ENCODE measurements at regions of chr19 and their contacts with region 1.

Region 1: DNA sequence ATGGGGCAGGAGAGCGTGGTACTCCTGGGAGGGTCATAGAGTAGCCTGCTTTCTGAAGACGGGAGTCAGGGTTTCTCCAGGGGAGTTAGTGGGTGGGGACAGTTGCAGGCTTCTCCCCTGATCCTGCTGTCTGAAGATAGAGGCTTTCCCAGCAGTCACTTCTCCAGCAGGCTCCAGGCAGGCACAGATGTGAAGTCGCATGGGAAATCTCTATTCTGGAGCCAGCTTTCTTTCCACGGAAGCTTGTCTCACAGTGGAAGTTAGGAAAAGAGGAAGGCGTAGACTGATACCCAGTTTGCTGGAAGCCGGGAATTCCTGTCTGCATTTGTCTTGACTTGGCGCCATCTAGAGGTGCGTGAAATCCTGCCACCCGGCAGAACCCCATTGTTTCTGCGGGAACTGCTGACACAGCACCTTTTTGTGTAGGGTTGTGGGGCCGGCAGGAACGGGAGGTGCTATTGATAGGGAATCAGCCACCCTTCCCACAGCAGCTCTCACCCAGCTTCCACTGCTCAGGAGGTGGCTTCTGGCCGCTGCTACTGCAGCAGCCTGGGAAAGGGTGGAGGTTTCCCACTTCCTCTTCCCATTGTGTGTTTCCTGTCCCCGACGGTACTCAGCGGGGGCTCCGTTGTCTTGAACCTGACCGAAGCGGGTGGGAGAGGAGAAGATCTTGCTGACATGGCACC is 28.5 kb upstream of the NPAS1 start:
- DNase-seq: peak; percentile 93
- H3K4me3 ChIP-seq: peak overlapping the region; percentile 2
- H3K27ac ChIP-seq: peak overlapping the region; percentile 57
- H3K4me1 ChIP-seq: peaks cover 22% of the 10 kb centered on the region
- H3K27me3 ChIP-seq: no peaks in the 10 kb centered on the region
- CTCF ChIP-seq: peak; percentile 93

Region 2: GRCh38 chr19:46860125-46860845 is 130.8 kb before region 1 on chr19:
- CTCF ChIA-PET with region 1: interaction called, 12 read pairs
- POLR2A ChIA-PET with region 1: no interaction called
- intact Hi-C with region 1: loop called (anchors 1 kb)
- DNase-seq: peak; percentile 100
- H3K4me3 ChIP-seq: peak overlapping the region; percentile 88
- H3K27ac ChIP-seq: peak overlapping the region; percentile 100
- H3K4me1 ChIP-seq: peaks cover 43% of the 10 kb centered on the region
- H3K27me3 ChIP-seq: no peaks in the 10 kb centered on the region
- CTCF ChIP-seq: no peak

Region 3: GRCh38 chr19:46872967-46873366 is 118.2 kb before region 1 on chr19:
- CTCF ChIA-PET with region 1: no interaction called
- POLR2A ChIA-PET with region 1: no interaction called
- intact Hi-C with region 1: no loop called
- DNase-seq: no peak
- H3K4me3 ChIP-seq: no peak overlapping the region
- H3K27ac ChIP-seq: no peak overlapping the region
- H3K4me1 ChIP-seq: no peaks in the 10 kb centered on the region
- H3K27me3 ChIP-seq: no peaks in the 10 kb centered on the region
- CTCF ChIP-seq: no peak